Activated CD4-positive, alpha-beta T cell treated with anti-CD3 and anti-CD28 coated beads for 36 hours (primary cell): ENCODE measurements at regions of chr9 and their contacts with region 1.

Region 1: GRCh38 chr9:128296337-128297220 is 20.5 kb downstream of the SWI5 start:
- DNase-seq: no peak
- ATAC-seq: no peak
- H3K4me3 Mint-ChIP-seq: no peak overlapping the region
- H3K27ac Mint-ChIP-seq: no peak overlapping the region
- H3K4me1 Mint-ChIP-seq: no peaks in the 10 kb centered on the region
- H3K27me3 Mint-ChIP-seq: no peaks in the 10 kb centered on the region

Region 2: GRCh38 chr9:126956917-126957686 is 1339.5 kb before region 1 on chr9:
- CTCF ChIA-PET with region 1: no interaction called
- POLR2A ChIA-PET with region 1: no interaction called
- intact Hi-C with region 1: no loop called
- DNase-seq: no peak
- ATAC-seq: peak; percentile 44
- H3K4me3 Mint-ChIP-seq: no peak overlapping the region
- H3K27ac Mint-ChIP-seq: no peak overlapping the region
- H3K4me1 Mint-ChIP-seq: no peaks in the 10 kb centered on the region
- H3K27me3 Mint-ChIP-seq: peaks cover 10% of the 10 kb centered on the region

Region 3: DNA sequence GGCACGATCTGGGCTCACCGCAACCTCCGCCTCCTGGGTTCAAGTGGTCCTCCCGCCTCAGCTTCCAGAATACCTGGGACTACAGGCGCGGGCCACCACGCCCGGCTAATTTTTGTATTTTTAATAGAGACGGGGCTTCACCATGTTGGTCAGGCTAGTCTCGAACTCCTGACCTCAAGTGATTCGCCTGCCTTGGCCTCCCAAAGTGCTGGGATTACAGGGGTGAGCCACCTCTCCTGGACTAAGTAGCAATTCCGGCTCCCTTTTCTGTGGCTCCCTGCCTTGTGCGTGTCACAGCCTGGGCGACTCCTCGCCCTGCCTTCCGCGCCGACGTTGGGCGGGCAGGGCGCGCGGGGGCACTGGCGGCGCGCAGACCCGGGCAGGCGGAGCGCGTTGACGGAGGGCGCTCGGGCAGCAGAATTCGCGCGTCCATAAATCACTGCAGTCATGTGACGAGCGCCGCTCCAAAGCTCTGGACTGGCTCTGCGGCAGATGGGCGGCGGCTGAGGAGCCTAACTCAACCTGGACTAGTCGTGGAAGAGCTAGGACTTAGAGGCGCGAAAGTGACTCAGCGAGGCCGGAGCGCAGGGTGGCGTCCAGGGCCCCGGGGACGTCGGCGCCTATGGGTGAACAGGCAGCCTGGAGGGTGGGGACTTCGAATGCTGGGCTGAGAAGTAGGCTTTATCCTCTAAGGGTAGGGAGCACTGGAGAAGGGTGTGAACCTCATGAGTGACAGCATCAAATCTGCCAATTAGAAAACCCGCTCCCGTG is 103.8 kb before region 1 on chr9:
- CTCF ChIA-PET with region 1: no interaction called
- POLR2A ChIA-PET with region 1: no interaction called
- intact Hi-C with region 1: no loop called
- DNase-seq: peak; percentile 77
- ATAC-seq: peak; percentile 70
- H3K4me3 Mint-ChIP-seq: peak overlapping the region; percentile 49
- H3K27ac Mint-ChIP-seq: no peak overlapping the region
- H3K4me1 Mint-ChIP-seq: peaks cover 27% of the 10 kb centered on the region
- H3K27me3 Mint-ChIP-seq: no peaks in the 10 kb centered on the region

Region 4: GRCh38 chr9:128412120-128412790 is 115.7 kb after region 1 on chr9:
- CTCF ChIA-PET with region 1: interaction called, 4 read pairs
- POLR2A ChIA-PET with region 1: no interaction called
- intact Hi-C with region 1: loop called (anchors 1 kb)
- DNase-seq: peak; percentile 78
- ATAC-seq: peak; percentile 53
- H3K4me3 Mint-ChIP-seq: no peak overlapping the region
- H3K27ac Mint-ChIP-seq: no peak overlapping the region
- H3K4me1 Mint-ChIP-seq: no peaks in the 10 kb centered on the region
- H3K27me3 Mint-ChIP-seq: peaks cover 49% of the 10 kb centered on the region

Region 5: GRCh38 chr9:128593039-128593438 is 296.5 kb after region 1 on chr9:
- CTCF ChIA-PET with region 1: no interaction called
- POLR2A ChIA-PET with region 1: no interaction called
- intact Hi-C with region 1: loop called in 1 of 2 experiments (anchors 10 kb)
- DNase-seq: no peak
- ATAC-seq: no peak
- H3K4me3 Mint-ChIP-seq: no peak overlapping the region
- H3K27ac Mint-ChIP-seq: no peak overlapping the region
- H3K4me1 Mint-ChIP-seq: peaks cover 7% of the 10 kb centered on the region
- H3K27me3 Mint-ChIP-seq: no peaks in the 10 kb centered on the region